GM12878 (cell line): ENCODE measurements at regions of chr12 and their contacts with region 1.

Region 1: GRCh38 chr12:112347581-112347982 is 34.6 kb downstream of the HECTD4 start:
- DNase-seq: no peak
- ATAC-seq: peak; percentile 87
- H3K4me3 ChIP-seq: no peak overlapping the region
- H3K27ac ChIP-seq: no peak overlapping the region
- H3K4me1 ChIP-seq: peaks cover 32% of the 10 kb centered on the region
- H3K27me3 ChIP-seq: no peaks in the 10 kb centered on the region
- CTCF ChIP-seq: no peak
- EP300 ChIP-seq: no peak
- POLR2A ChIP-seq: no peak
- RAD21 ChIP-seq: no peak

Region 2: DNA sequence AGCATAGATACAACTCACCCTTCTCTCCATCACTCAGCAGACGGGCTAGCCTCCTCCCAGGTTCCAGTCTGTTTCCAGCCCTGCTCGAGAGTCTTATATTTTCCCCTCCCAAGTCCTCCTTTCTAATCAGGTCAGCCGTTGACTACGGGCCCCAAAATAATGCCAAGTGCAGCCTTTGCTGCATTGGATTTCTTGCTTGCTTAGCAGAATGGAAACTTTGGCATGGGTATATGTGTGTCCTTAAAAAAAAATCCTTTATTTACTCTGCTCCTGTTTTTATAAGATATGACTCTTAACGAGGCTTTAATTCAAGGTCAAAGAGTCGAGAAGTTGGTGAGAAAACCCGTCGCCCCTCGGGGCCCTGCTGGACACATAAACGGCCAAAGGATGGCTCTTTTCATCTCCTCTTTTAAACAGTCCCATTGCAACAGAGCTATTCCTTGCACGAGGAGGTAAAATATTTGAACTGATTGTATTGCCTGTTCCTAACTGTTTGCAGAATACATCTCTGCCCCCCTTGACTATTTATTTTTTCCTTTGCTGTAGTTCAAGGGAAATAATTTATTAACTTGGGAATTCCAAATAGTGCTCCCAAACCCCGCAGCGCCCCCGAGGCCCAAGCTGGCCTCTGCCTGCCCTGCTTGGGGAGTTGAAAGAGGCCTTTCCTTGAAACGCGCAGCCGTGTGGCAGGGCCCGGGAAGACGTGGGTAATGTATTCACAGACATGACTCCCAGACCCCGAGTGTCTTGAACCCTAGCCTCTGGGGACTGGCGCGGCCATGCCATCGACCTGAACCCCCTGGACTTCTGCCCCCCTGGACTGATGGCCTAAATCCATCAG is 1270.8 kb before region 1 on chr12:
- CTCF ChIA-PET with region 1: no interaction called
- POLR2A ChIA-PET with region 1: no interaction called
- RAD21 ChIA-PET with region 1: no interaction called
- SMC1A ChIA-PET with region 1: no interaction called
- in situ Hi-C with region 1: no loop called
- intact Hi-C with region 1: no loop called
- DNase-seq: no peak
- ATAC-seq: no peak
- H3K4me3 ChIP-seq: no peak overlapping the region
- H3K27ac ChIP-seq: no peak overlapping the region
- H3K4me1 ChIP-seq: no peaks in the 10 kb centered on the region
- H3K27me3 ChIP-seq: no peaks in the 10 kb centered on the region; a peak in 2 of 4 replicates
- CTCF ChIP-seq: no peak
- EP300 ChIP-seq: no peak
- POLR2A ChIP-seq: no peak
- RAD21 ChIP-seq: no peak

Region 3: GRCh38 chr12:112309828-112310227 is 37.8 kb before region 1 on chr12:
- CTCF ChIA-PET with region 1: no interaction called
- POLR2A ChIA-PET with region 1: no interaction called
- RAD21 ChIA-PET with region 1: no interaction called
- SMC1A ChIA-PET with region 1: interaction called, 3 read pairs
- in situ Hi-C with region 1: no loop called
- intact Hi-C with region 1: loop called (anchors 5 kb)
- DNase-seq: no peak
- ATAC-seq: peak; percentile 71
- H3K4me3 ChIP-seq: no peak overlapping the region
- H3K27ac ChIP-seq: no peak overlapping the region; the same call in 1 of the 2 replicates
- H3K4me1 ChIP-seq: peaks cover 13% of the 10 kb centered on the region
- H3K27me3 ChIP-seq: no peaks in the 10 kb centered on the region
- CTCF ChIP-seq: no peak
- EP300 ChIP-seq: peak in 1 of 2 experiments; percentile 21; a peak in 1 of 4 replicates
- POLR2A ChIP-seq: no peak
- RAD21 ChIP-seq: peak; percentile 5; the same call in 1 of the 2 replicates